ENCODE measurements at regions of chr5 and their contacts with region 1.

Region 1: GRCh38 chr5:140664359-140665119 is at the start of gene WDR55:
- DNase-seq: peak; percentile 98
- H3K4me3 Mint-ChIP-seq: peak within 1 kb of the TSS; percentile 99
- H3K27ac Mint-ChIP-seq: peak within 1 kb of the TSS; percentile 94
- H3K4me1 Mint-ChIP-seq: peaks cover 27% of the 10 kb centered on the region
- H3K27me3 Mint-ChIP-seq: no peaks in the 10 kb centered on the region
- total RNA-seq, gene WDR55: 30.4 to 32.1 TPM

Region 2: DNA sequence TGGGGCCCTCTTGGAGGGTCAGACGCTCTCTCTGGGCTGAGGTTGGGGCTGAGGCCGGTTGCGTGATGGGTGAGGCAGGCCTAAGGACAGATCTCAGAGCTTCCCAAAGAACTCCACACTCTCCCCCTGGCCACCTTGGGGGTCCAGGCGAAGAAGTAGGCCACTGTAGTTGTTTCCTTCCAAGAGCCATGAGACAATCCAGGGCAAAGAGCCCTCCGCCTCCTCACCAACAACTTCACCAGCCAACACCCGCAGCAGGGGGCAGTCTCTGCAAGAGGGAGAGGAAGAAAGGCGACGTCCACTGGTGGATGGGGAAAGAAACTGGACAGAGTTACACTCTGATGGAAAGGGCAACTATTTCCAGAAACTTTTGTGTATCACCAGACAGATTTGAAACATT is 89.2 kb before region 1 on chr5:
- CTCF ChIA-PET with region 1: no interaction called
- POLR2A ChIA-PET with region 1: no interaction called
- intact Hi-C with region 1: no loop called
- DNase-seq: peak; percentile 35
- H3K4me3 Mint-ChIP-seq: no peak overlapping the region
- H3K27ac Mint-ChIP-seq: no peak overlapping the region
- H3K4me1 Mint-ChIP-seq: peaks cover under 1% of the 10 kb centered on the region
- H3K27me3 Mint-ChIP-seq: peaks cover 1% of the 10 kb centered on the region

Region 3: GRCh38 chr5:140690941-140691924 is 26.7 kb after region 1 on chr5 and contains the starts of genes HARS1 and HARS2:
- CTCF ChIA-PET with region 1: interaction called, 11 read pairs
- POLR2A ChIA-PET with region 1: interaction called, 11 read pairs
- intact Hi-C with region 1: loop called (anchors 1 kb)
- DNase-seq: peak; percentile 92
- H3K4me3 Mint-ChIP-seq: peak within 1 kb of the TSS; percentile 100
- H3K27ac Mint-ChIP-seq: peak within 1 kb of the TSS; percentile 99
- H3K4me1 Mint-ChIP-seq: peaks cover 40% of the 10 kb centered on the region
- H3K27me3 Mint-ChIP-seq: no peaks in the 10 kb centered on the region
- total RNA-seq, gene HARS1: 91.1 to 91.7 TPM
- total RNA-seq, gene HARS2: 26.9 to 28.9 TPM

Measured in activated CD4-positive, alpha-beta memory T cell treated with anti-CD3 and anti-CD28 coated beads for 36 hours (primary cell).